ENCODE measurements at regions of chr19 and their contacts with region 1.

Region 1: GRCh38 chr19:29241324-29241723 is 28.4 kb upstream of the UQCRFS1 start:
- DNase-seq: no peak
- ATAC-seq: no peak
- H3K4me3 ChIP-seq: no peak overlapping the region
- H3K4me3 Mint-ChIP-seq: no peak overlapping the region
- H3K27ac ChIP-seq: no peak overlapping the region
- H3K27ac Mint-ChIP-seq: no peak overlapping the region
- H3K4me1 ChIP-seq: no peaks in the 10 kb centered on the region
- H3K4me1 Mint-ChIP-seq: no peaks in the 10 kb centered on the region
- H3K27me3 ChIP-seq: peaks cover 0 to 3% of the 10 kb centered on the region in 2 experiments
- H3K27me3 Mint-ChIP-seq: peaks cover 37% of the 10 kb centered on the region
- CTCF ChIP-seq: no peak

Region 2: GRCh38 chr19:29170554-29170953 is 70.8 kb before region 1 on chr19:
- CTCF ChIA-PET with region 1: no interaction called
- POLR2A ChIA-PET with region 1: no interaction called
- intact Hi-C with region 1: no loop called
- DNase-seq: no peak
- ATAC-seq: no peak
- H3K4me3 ChIP-seq: no peak overlapping the region
- H3K4me3 Mint-ChIP-seq: no peak overlapping the region
- H3K27ac ChIP-seq: no peak overlapping the region
- H3K27ac Mint-ChIP-seq: no peak overlapping the region
- H3K4me1 ChIP-seq: no peaks in the 10 kb centered on the region
- H3K4me1 Mint-ChIP-seq: no peaks in the 10 kb centered on the region
- H3K27me3 ChIP-seq: no peaks in the 10 kb centered on the region
- H3K27me3 Mint-ChIP-seq: no peaks in the 10 kb centered on the region
- CTCF ChIP-seq: no peak

Region 3: DNA sequence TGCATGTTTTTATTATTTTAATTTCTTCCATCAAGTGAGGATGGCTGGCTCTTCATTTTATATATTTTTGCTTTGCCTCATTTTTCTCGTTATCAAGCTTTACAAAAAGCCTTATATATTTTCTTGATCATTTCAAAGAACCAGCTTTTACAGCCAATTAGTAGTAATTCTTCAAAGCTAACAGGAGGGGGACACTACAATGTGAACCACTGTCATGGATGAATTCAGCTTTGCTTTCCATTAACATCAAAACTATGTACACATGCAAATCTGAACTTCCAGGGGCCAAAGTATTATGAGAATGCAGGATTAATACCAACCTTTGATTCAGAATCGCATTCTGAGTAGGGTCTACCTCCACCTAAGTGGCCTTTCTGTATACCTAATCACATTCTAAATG is 39.5 kb before region 1 on chr19:
- CTCF ChIA-PET with region 1: no interaction called
- POLR2A ChIA-PET with region 1: no interaction called
- intact Hi-C with region 1: loop called in 1 of 2 experiments (anchors 5 kb)
- DNase-seq: no peak
- ATAC-seq: no peak
- H3K4me3 ChIP-seq: no peak overlapping the region
- H3K4me3 Mint-ChIP-seq: no peak overlapping the region
- H3K27ac ChIP-seq: no peak overlapping the region
- H3K27ac Mint-ChIP-seq: no peak overlapping the region
- H3K4me1 ChIP-seq: no peaks in the 10 kb centered on the region
- H3K4me1 Mint-ChIP-seq: peaks cover 17% of the 10 kb centered on the region
- H3K27me3 ChIP-seq: no peaks in the 10 kb centered on the region
- H3K27me3 Mint-ChIP-seq: no peaks in the 10 kb centered on the region
- CTCF ChIP-seq: no peak